ENCODE measurements at regions of chr19 and their contacts with region 1.

Region 1: DNA sequence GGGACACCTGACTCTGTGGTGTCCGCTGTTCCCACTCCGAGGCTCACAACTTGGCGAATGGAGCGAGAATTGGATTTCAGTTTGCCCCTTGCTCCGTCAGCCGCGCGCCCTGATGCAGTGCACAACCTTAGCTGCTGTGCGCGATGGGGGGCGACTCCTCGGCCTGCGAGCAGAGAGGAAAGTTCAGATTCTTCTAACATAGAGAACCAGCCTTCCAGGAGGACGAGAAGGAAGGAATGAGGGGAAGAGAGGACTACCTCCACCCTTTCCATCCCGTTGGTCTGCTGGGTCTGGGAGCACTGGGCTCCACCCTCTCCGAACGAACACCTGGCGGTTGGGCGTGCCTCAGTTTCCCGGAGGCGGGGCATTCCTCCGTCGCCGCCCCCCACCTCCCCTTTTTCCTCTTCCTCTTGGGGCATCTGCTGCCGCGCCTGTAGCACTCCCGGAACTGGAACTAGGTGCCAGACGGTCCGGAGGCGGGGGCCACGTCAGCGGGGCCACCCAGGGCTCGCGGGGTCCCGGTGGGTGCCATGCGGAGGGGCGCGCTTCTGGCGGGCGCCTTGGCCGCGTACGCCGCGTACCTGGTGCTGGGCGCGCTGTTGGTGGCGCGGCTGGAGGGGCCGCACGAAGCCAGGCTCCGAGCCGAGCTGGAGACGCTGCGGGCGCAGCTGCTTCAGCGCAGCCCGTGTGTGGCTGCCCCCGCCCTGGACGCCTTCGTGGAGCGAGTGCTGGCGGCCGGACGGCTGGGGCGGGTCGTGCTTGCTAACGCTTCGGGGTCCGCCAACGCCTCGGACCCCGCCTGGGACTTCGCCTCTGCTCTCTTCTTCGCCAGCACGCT is at the start of gene KCNK6:
- DNase-seq: no peak
- H3K4me3 ChIP-seq: peak within 1 kb of the TSS; percentile 64
- CTCF ChIP-seq: no peak

Region 2: GRCh38 chr19:38335949-38336637 is 16.5 kb after region 1 on chr19:
- CTCF ChIA-PET with region 1: interaction called, 19 read pairs
- POLR2A ChIA-PET with region 1: interaction called, 4 read pairs
- DNase-seq: peak; percentile 44
- H3K4me3 ChIP-seq: peak overlapping the region; percentile 89
- CTCF ChIP-seq: no peak

Measured in AG04449 (cell line).